Thyroid gland (tissue), 4 donors: ENCODE measurements at regions of chr16 and their contacts with region 1.

Region 1: GRCh38 chr16:13919683-13920509 is at the start of gene ERCC4:
- DNase-seq: peak; percentile 100
- H3K4me3 ChIP-seq: peak within 1 kb of the TSS; percentile 64 to 77 (median 66)
- H3K27ac ChIP-seq: peak within 1 kb of the TSS in 2 of 3 donors; percentile 29 to 80
- H3K4me1 ChIP-seq: peaks cover 5% of the 10 kb centered on the region in 2 donors
- H3K27me3 ChIP-seq: no peaks in the 10 kb centered on the region
- CTCF ChIP-seq: peak; percentile 83 to 97 (median 88)
- POLR2A ChIP-seq: peak in 1 of 2 donors; percentile 80
- total RNA-seq, gene ERCC4: 7.5 to 13.2 (median 11.9) TPM

Region 2: GRCh38 chr16:13492046-13492445 is 427.9 kb before region 1 on chr16:
- intact Hi-C with region 1: no loop called
- DNase-seq: no peak
- H3K4me3 ChIP-seq: no peak overlapping the region
- H3K27ac ChIP-seq: no peak overlapping the region
- H3K4me1 ChIP-seq: no peaks in the 10 kb centered on the region
- H3K27me3 ChIP-seq: no peaks in the 10 kb centered on the region
- CTCF ChIP-seq: no peak
- POLR2A ChIP-seq: no peak

Region 3: GRCh38 chr16:14003074-14003570 is 83.2 kb after region 1 on chr16:
- intact Hi-C with region 1: loop called (anchors 10 kb)
- DNase-seq: peak; percentile 35 to 47
- H3K4me3 ChIP-seq: peak overlapping the region in 1 of 3 donors; percentile 1
- H3K27ac ChIP-seq: peak overlapping the region in 2 of 3 donors; percentile 38 to 44
- H3K4me1 ChIP-seq: peaks cover 0 to 9% of the 10 kb centered on the region in 2 donors
- H3K27me3 ChIP-seq: no peaks in the 10 kb centered on the region
- CTCF ChIP-seq: peak in 2 of 6 experiments; percentile 13 to 48
- POLR2A ChIP-seq: no peak

Region 4: DNA sequence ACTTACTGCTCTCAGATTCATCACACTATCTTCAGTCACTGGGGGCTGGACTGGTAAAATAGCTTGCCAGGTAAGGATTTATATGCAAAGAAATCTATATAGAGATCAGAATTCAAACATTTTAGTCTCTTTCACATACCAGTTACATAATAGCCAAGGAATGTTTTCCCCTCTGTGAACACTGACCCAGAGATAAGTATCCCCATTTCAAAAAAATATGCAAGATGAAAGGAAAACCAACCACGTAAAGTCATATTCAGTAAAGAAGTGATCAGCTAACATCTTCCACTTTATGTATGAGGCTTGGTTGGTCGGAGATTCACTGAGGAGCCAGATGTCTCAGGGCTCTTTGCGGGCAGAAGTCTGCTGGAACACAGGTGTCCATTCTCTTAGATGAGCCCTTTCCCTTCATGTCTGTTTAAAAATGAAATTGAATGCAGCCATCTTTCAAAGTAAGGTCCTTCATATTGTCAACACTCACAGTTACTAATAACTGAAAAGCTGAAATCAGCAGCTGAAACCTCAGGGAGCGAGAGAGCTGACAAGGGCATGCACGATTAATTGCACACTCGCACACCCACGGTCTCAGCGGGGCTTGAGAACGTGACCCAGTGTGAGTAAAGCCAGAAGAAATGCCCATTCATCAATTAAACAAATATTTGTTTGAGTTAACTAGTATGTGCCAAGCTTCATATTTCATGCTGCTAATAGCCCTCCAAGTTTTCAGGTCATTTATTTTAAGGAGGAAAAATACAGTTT is 312.4 kb after region 1 on chr16:
- intact Hi-C with region 1: loop called (anchors 10 kb)
- DNase-seq: no peak
- H3K4me3 ChIP-seq: no peak overlapping the region
- H3K27ac ChIP-seq: no peak overlapping the region
- H3K4me1 ChIP-seq: peaks cover 0 to 6% of the 10 kb centered on the region in 2 donors
- H3K27me3 ChIP-seq: no peaks in the 10 kb centered on the region
- CTCF ChIP-seq: no peak
- POLR2A ChIP-seq: no peak

Region 5: DNA sequence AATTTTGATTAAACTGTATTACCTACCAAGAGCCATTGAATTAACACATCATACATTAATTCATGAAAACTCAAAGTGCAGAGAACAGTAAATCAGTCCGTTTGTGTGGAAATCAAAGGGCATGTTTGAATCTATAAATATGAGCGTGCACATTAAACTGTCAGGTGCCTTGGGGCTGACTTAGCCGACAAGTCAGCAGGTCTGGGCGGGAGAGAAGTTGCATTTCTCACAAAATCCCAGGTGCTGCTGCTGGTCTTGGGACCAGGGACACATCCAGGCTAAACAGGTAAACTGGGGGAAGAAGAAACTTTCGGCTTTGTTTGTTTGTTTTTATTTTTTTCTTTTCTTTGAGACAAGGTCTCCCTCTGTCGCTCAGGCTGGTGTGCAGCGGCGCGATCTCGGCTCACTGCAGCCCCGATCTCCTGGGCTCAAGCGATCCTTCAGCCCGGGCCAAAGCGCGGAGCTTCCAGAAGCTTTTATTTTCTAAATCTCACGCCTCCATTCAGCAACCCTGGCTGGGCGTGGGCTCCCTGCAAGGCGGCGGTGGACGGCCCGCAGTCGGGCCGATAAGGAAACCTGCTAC is 365.1 kb after region 1 on chr16:
- intact Hi-C with region 1: loop called (anchors 5 kb)
- DNase-seq: peak in 1 of 2 donors; percentile 67
- H3K4me3 ChIP-seq: peak overlapping the region; percentile 42 to 69 (median 56)
- H3K27ac ChIP-seq: peak overlapping the region; percentile 5 to 80 (median 73)
- H3K4me1 ChIP-seq: no peaks in the 10 kb centered on the region
- H3K27me3 ChIP-seq: no peaks in the 10 kb centered on the region
- CTCF ChIP-seq: peak in 3 of 6 experiments; percentile 16 to 29 (median 26)
- POLR2A ChIP-seq: no peak